MCF 10A (cell line): ENCODE measurements at regions of chrX and their contacts with region 1.

Region 1: DNA sequence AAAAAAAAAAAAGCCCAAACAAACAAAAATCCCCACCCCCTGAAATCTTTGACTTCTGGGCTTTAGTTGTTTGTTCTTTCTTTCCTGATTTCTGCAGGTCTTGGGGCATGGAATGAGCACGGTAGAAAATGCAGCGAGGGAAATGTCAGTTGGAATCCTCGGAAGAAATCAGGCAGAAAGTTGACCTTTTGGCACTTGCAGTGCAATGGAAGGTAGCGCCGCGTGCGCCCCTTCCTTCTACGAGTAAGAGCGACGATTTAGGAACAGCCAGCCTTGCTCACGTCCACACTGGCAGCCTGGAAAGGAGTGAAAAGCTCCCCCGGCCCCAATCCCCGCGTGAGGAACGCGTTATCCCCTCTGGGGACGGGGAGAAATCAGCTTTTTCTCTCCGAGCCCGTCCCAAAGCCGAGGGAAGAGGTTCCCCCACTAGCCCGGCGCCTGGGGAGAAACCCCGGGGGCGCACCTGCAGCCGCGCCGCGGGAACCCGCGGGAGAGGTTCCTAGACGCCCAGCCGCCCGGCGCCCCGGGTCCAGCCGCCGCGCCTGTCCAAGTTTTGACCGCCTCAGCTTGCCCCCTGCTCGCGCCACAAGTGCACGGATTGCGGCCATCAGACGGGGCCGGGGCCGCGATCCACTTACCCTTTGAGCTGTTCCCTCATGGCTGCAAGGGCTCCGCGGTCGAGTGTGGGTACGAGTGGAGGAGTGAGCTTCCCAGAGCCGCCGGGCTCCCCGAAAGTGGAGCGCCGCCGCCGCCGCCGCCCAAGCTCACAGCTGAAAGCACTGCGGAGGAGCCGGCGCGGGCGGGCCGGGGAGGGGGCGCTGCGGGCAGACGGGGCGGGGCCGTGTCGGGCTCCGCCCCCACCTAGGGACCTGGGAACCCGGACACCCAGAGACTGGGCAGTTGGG is 194.6 kb upstream of the FTHL17 start:
- DNase-seq: peak; percentile 53
- H3K4me3 Mint-ChIP-seq: peak overlapping the region; percentile 74
- H3K27ac Mint-ChIP-seq: peak overlapping the region; percentile 87
- H3K4me1 Mint-ChIP-seq: peaks cover 8% of the 10 kb centered on the region
- H3K27me3 Mint-ChIP-seq: peaks cover 44% of the 10 kb centered on the region
- CTCF ChIP-seq: no peak

Region 2: GRCh38 chrX:31223817-31224216 is 42.6 kb before region 1 on chrX:
- CTCF ChIA-PET with region 1: interaction called, 4 read pairs
- POLR2A ChIA-PET with region 1: interaction called, 38 read pairs
- intact Hi-C with region 1: loop called (anchors 1 kb)
- DNase-seq: peak; percentile 75
- H3K4me3 Mint-ChIP-seq: peak overlapping the region; percentile 32
- H3K27ac Mint-ChIP-seq: peak overlapping the region; percentile 74
- H3K4me1 Mint-ChIP-seq: peaks cover 5% of the 10 kb centered on the region
- H3K27me3 Mint-ChIP-seq: peaks cover 11% of the 10 kb centered on the region
- CTCF ChIP-seq: no peak

Region 3: DNA sequence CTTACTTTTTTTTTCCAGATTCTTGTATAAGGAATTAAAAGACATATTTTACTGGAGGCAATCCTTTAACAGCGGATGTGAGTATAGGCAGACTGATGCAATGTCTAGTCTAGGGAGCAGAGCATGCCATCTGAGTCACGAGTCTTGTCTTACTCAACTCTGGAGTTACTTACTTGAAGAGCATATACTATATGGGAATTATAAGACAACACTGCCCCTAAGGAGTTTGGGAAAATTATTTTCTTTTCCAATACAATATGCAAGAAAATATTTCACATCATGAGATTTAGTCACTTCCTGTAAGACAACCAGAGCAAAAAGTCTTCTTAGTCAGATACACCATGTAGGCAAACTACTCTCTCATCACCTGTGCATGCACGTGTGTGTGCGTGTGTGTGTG is 342.7 kb after region 1 on chrX:
- CTCF ChIA-PET with region 1: no interaction called
- POLR2A ChIA-PET with region 1: no interaction called
- intact Hi-C with region 1: loop called (anchors 5 kb)
- DNase-seq: peak; percentile 88
- H3K4me3 Mint-ChIP-seq: no peak overlapping the region
- H3K27ac Mint-ChIP-seq: peak overlapping the region; percentile 55
- H3K4me1 Mint-ChIP-seq: peaks cover 16% of the 10 kb centered on the region
- H3K27me3 Mint-ChIP-seq: no peaks in the 10 kb centered on the region
- CTCF ChIP-seq: no peak